ENCODE measurements at regions of chr1 and their contacts with region 1.

Region 1: GRCh38 chr1:147494998-147495580 is 46.2 kb upstream of the BCL9 start:
- DNase-seq: peak; percentile 27 to 73 (median 65)
- ATAC-seq: peak; percentile 94
- H3K4me3 ChIP-seq: no peak overlapping the region
- H3K4me3 Mint-ChIP-seq: peak overlapping the region in 1 of 10 donors; percentile 49
- H3K27ac ChIP-seq: no peak overlapping the region
- H3K27ac Mint-ChIP-seq: peak overlapping the region in 1 of 9 donors; percentile 33
- H3K4me1 ChIP-seq: no peaks in the 10 kb centered on the region
- H3K4me1 Mint-ChIP-seq: peaks cover 0 to 7% (median 0%) of the 10 kb centered on the region in 7 donors
- H3K27me3 ChIP-seq: peaks cover 0 to 4% of the 10 kb centered on the region in 2 donors
- H3K27me3 Mint-ChIP-seq: peaks cover 0 to 18% (median 0%) of the 10 kb centered on the region in 5 donors

Region 2: GRCh38 chr1:147409886-147410285 is 85.2 kb before region 1 on chr1:
- CTCF ChIA-PET with region 1: no interaction called
- POLR2A ChIA-PET with region 1: no interaction called
- intact Hi-C with region 1: no loop called
- DNase-seq: no peak
- ATAC-seq: no peak
- H3K4me3 ChIP-seq: no peak overlapping the region
- H3K4me3 Mint-ChIP-seq: no peak overlapping the region
- H3K27ac ChIP-seq: no peak overlapping the region
- H3K27ac Mint-ChIP-seq: no peak overlapping the region
- H3K4me1 ChIP-seq: no peaks in the 10 kb centered on the region
- H3K4me1 Mint-ChIP-seq: no peaks in the 10 kb centered on the region
- H3K27me3 ChIP-seq: no peaks in the 10 kb centered on the region
- H3K27me3 Mint-ChIP-seq: peaks cover 11 to 24% (median 13%) of the 10 kb centered on the region in 5 donors

Region 3: DNA sequence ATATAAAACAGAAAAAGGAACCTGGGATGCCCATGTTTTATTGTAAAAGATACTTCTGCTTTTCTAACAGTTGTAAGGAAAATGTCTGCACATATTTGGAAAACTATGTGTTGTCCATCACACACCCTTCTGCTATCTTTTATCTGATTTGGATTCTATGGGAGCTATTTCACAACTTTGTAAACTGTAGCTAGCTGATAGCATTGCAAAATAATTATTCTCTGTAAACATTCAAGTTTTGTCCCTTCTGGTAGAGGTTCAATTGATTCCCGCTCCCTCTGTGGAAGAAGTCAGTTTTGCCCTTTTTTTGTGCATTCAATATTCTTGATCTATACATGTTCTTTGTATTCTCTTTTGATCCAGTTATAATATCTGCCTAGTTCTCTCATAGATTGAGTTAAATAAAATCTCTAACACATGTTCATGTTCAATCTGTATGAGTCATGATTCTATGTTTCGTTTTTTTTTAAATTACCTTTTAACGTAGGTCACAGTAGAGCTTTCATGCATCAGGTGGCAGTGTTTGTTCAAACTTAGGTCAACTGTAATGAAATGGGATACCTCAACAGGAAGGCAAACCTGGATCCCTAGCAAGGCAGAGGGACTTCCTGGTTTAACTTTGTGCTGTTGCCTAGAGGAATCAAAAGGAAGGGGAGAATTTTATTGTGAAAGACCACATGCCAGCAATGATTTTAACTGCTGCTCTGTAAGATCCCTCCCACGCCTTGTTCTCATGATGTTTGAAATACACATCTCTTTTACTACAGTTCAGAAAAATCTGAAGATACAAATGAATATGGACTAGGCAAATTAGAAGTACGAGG is 20.2 kb after region 1 on chr1:
- CTCF ChIA-PET with region 1: no interaction called
- POLR2A ChIA-PET with region 1: no interaction called
- intact Hi-C with region 1: loop called in 1 of 2 experiments (anchors 1 kb)
- DNase-seq: peak in 6 of 9 donors; percentile 11 to 37 (median 24)
- ATAC-seq: peak; percentile 42
- H3K4me3 ChIP-seq: no peak overlapping the region
- H3K4me3 Mint-ChIP-seq: no peak overlapping the region
- H3K27ac ChIP-seq: no peak overlapping the region
- H3K27ac Mint-ChIP-seq: peak overlapping the region in 1 of 9 donors; percentile 6
- H3K4me1 ChIP-seq: no peaks in the 10 kb centered on the region
- H3K4me1 Mint-ChIP-seq: peaks cover 0 to 15% (median 6%) of the 10 kb centered on the region in 7 donors
- H3K27me3 ChIP-seq: no peaks in the 10 kb centered on the region
- H3K27me3 Mint-ChIP-seq: peaks cover 0 to 19% (median 3%) of the 10 kb centered on the region in 5 donors

Region 4: DNA sequence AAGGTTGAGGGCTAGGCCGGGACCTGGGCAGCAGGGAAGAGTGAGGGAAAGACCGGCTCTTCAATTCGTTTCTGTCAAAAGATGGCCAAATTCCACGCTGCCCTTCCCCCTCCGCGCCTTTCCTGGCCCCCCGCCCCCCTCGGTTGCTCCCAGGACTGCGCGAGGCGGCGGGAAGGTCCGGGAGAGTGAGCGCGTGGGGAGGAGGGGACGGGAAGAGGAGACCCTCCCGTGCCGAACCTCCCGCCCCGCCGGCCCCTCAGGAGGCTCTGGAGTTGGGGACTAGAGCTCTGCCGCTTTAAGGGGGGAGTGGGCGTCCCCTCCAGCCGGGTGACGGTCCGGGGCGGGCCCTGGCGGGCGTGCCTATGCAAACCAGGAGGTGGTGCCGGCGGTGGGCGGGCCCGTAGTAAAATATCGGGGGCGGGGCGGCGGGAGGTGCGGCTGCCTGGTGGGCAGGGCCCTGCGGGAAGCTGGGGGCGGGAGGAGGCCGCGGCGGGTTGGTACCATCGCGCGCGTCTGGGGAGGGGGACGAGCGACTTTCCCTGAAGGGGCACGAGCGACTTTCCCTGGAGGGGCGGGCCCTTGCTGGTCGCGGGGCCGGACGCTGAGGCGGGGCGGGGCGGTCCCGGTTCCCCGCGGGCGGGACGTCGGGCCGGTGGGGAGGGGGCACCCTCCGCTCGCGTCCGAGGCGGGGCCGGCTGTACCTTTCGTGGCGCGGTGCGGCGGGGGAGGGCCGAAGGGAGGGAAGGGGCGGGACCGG is 104.5 kb after region 1 on chr1:
- CTCF ChIA-PET with region 1: interaction called, 3 read pairs
- POLR2A ChIA-PET with region 1: no interaction called
- intact Hi-C with region 1: loop called in 1 of 2 experiments (anchors 1 kb)
- DNase-seq: peak; percentile 90 to 97 (median 96)
- ATAC-seq: peak; percentile 90
- H3K4me3 ChIP-seq: peak overlapping the region; percentile 72
- H3K4me3 Mint-ChIP-seq: peak overlapping the region; percentile 82 to 96 (median 90)
- H3K27ac ChIP-seq: peak overlapping the region; percentile 73
- H3K27ac Mint-ChIP-seq: peak overlapping the region; percentile 55 to 94 (median 87)
- H3K4me1 ChIP-seq: peaks cover 8 to 15% of the 10 kb centered on the region in 2 donors
- H3K4me1 Mint-ChIP-seq: peaks cover 15 to 38% (median 35%) of the 10 kb centered on the region in 7 donors
- H3K27me3 ChIP-seq: no peaks in the 10 kb centered on the region
- H3K27me3 Mint-ChIP-seq: peaks cover 0 to 18% (median 0%) of the 10 kb centered on the region in 5 donors

Region 5: DNA sequence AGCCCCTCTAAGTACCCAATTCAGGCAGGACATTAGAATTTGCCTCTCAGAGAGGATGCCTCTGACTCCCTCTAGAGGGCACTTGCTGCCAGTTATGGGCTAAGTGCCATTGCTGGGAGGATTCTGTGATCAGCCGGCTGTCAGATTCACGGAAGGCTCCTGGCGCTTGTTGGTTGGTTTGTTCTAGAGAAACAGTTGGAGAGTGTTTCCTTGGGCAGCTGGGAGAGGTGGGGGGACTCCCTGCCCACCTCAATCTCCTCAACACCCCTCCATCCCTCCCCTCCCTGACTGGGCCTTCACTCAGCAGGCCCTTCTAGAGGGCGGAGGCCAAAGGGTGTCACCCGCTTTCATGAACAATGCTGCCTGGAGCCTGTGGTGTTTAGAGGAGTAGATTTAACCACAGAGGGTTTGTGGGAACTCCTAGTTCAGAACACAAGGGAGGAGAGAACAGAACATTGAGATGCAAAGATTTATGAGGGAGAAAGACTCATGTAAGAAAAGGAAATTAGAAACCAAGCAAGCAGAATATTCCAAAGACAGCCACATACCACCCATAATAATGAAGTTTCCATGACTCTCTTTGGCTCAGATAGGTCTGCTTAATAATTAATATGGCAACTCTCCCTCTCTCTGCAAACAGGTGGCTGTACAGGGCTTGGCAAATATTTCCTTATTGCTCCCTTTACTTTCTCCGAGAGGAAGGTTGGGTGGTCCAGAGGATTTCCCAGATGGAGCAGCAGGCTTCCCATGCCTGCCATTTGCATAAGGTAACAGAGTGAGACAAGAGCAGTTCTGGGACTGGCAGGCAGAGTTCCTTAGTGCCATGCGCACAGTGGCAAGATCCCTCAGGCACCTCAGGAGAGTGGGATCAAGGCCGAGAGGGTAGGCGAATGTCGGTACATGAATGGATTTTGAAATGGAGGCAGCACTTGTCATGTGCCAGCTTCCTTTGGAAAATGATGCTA is 205.2 kb after region 1 on chr1:
- CTCF ChIA-PET with region 1: no interaction called
- POLR2A ChIA-PET with region 1: no interaction called
- intact Hi-C with region 1: loop called (anchors 1 kb)
- DNase-seq: peak; percentile 16 to 66 (median 58)
- ATAC-seq: peak; percentile 91
- H3K4me3 ChIP-seq: no peak overlapping the region
- H3K4me3 Mint-ChIP-seq: peak overlapping the region in 9 of 10 donors; percentile 18 to 77 (median 62)
- H3K27ac ChIP-seq: peak overlapping the region; percentile 29
- H3K27ac Mint-ChIP-seq: peak overlapping the region in 7 of 9 donors; percentile 15 to 78 (median 60)
- H3K4me1 ChIP-seq: peaks cover 0 to 7% of the 10 kb centered on the region in 2 donors
- H3K4me1 Mint-ChIP-seq: peaks cover 6 to 17% (median 15%) of the 10 kb centered on the region in 7 donors
- H3K27me3 ChIP-seq: no peaks in the 10 kb centered on the region
- H3K27me3 Mint-ChIP-seq: peaks cover 4 to 31% (median 11%) of the 10 kb centered on the region in 5 donors

Measured in naive thymus-derived CD4-positive, alpha-beta T cell (primary cell).